ENCODE measurements at regions of chr11 and their contacts with region 1.

Region 1: GRCh38 chr11:73184953-73185671 is 33.0 kb upstream of the P2RY2 start:
- DNase-seq: peak; percentile 78
- ATAC-seq: peak; percentile 80
- H3K4me3 Mint-ChIP-seq: no peak overlapping the region
- H3K27ac Mint-ChIP-seq: no peak overlapping the region
- H3K4me1 Mint-ChIP-seq: peaks cover 10% of the 10 kb centered on the region
- H3K27me3 Mint-ChIP-seq: no peaks in the 10 kb centered on the region
- CTCF ChIP-seq: peak; percentile 71

Region 2: DNA sequence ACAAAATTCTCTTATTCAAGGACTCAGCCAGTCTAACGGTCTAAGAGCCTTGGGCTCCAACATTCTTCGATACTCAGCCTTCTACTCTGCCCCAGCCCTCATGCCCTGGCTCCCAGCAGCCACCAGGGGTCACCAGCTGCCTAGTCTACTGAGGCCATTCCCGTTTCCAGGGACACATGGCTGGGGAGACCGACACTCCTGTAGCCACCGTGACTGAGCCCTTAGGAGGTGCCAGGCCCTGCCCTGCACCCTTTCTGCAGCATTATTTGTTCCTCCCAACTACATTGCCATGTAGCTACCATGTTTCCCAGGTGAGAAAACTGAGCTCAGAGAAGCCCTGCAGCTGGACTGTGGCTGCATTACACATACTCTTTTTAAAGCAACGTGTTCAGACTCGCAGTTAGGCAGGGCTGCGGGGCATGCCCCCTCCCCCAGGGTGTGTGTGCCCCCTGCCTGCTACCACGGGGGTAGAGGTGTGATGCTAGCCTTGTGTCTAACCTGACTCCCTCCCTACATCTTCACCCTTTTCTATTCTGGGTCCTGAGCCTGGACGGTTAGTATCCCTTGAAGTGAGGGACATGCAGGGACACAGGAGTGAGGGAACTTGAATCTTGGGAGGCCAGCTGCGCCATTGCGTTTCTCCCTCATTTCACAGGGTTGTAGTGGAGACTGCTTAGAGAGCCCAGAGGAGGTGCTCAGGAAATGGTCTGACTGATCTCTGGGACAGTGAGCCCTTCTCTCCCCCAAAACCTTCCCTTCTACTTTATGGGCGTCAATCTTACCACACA is 353.4 kb before region 1 on chr11:
- CTCF ChIA-PET with region 1: interaction called, 83 read pairs
- POLR2A ChIA-PET with region 1: no interaction called
- DNase-seq: peak; percentile 90
- ATAC-seq: peak; percentile 97
- H3K4me3 Mint-ChIP-seq: no peak overlapping the region
- H3K27ac Mint-ChIP-seq: no peak overlapping the region
- H3K4me1 Mint-ChIP-seq: peaks cover 9% of the 10 kb centered on the region
- H3K27me3 Mint-ChIP-seq: peaks cover 6% of the 10 kb centered on the region
- CTCF ChIP-seq: peak; percentile 59

Region 3: DNA sequence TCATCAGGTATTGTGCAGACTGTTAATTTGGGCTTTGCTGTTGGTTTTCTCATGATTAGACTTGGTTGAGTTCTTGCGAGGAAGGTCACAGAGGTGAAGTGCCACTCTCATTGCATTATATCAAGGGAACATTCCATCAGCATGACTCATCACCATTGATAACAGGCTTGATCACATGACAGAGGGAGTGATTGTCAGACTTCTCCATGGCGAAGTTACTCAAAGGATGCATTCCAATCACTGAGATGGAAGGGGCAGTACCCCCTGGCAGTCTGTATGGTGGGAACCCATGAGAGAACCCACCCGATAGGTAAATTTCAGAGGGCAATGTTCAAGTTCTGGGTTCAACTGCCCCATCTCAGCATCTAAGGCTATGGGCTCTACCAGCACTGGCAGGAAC is 13.6 kb after region 1 on chr11:
- CTCF ChIA-PET with region 1: interaction called, 11 read pairs
- POLR2A ChIA-PET with region 1: no interaction called
- DNase-seq: peak; percentile 4
- ATAC-seq: no peak
- H3K4me3 Mint-ChIP-seq: no peak overlapping the region
- H3K27ac Mint-ChIP-seq: no peak overlapping the region
- H3K4me1 Mint-ChIP-seq: peaks cover 27% of the 10 kb centered on the region
- H3K27me3 Mint-ChIP-seq: no peaks in the 10 kb centered on the region; the same call in 1 of the 2 replicates
- CTCF ChIP-seq: no peak

Region 4: GRCh38 chr11:73218106-73218829 is 33.2 kb after region 1 on chr11 and contains the start of gene P2RY2:
- CTCF ChIA-PET with region 1: interaction called, 10 read pairs
- POLR2A ChIA-PET with region 1: no interaction called
- DNase-seq: peak; percentile 80
- ATAC-seq: peak; percentile 88
- H3K4me3 Mint-ChIP-seq: peak within 1 kb of the TSS; percentile 78
- H3K27ac Mint-ChIP-seq: no peak within 1 kb of the TSS
- H3K4me1 Mint-ChIP-seq: peaks cover 8% of the 10 kb centered on the region
- H3K27me3 Mint-ChIP-seq: peaks cover 58% of the 10 kb centered on the region
- CTCF ChIP-seq: no peak
- total RNA-seq, gene P2RY2: 0.94 to 1.2 TPM (median 1.2 TPM) in 3 replicates

Region 5: DNA sequence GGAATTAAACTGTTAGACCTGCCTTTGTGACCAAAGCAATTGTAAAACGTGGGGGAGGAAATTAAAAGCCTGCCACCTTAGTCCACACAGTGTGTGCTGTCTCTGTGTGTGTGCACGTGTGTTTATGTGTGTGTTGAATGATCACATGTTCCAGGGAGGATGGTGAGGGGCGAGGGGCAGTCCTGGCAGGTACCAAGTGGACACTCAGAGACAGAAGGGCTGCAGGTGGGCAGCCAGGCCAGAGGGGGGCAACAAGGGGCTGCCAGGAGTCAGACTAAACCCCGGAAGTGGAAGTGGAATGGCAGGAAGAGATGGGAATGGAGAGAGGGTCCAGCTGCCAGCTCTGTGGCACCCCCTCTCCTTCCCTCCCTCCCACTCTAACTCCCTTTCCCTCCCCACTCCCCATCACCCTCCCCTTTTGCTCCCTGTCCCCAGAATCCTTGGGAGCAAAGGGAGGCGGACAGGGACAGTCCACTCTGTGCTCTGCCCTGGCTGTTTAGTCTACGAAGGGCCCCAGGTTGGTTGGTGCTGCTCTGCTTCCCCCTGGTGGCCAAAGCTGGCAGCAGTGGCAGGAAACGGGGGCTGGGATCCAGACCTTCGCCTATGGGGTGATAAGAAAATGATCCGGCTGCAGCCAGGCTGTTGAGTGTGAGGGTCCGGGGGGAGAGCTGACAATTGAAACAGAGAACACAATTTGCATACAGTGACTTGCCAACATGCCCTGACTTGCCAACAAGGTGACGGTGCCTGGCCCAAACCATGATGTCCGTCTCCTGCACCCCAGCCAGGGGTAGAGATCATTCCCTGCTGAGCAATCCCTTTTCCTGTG is 57.4 kb after region 1 on chr11:
- CTCF ChIA-PET with region 1: interaction called, 129 read pairs
- POLR2A ChIA-PET with region 1: no interaction called
- DNase-seq: peak; percentile 87
- ATAC-seq: peak; percentile 91
- H3K4me3 Mint-ChIP-seq: peak overlapping the region; percentile 51
- H3K27ac Mint-ChIP-seq: no peak overlapping the region; the same call in 1 of the 2 replicates
- H3K4me1 Mint-ChIP-seq: peaks cover 36% of the 10 kb centered on the region
- H3K27me3 Mint-ChIP-seq: no peaks in the 10 kb centered on the region; the same call in 1 of the 2 replicates
- CTCF ChIP-seq: peak; percentile 67

Measured in WTC11 (cell line).